CD4-positive, alpha-beta T cell (primary cell): ENCODE measurements at regions of chr12 and their contacts with region 1.

Region 1: DNA sequence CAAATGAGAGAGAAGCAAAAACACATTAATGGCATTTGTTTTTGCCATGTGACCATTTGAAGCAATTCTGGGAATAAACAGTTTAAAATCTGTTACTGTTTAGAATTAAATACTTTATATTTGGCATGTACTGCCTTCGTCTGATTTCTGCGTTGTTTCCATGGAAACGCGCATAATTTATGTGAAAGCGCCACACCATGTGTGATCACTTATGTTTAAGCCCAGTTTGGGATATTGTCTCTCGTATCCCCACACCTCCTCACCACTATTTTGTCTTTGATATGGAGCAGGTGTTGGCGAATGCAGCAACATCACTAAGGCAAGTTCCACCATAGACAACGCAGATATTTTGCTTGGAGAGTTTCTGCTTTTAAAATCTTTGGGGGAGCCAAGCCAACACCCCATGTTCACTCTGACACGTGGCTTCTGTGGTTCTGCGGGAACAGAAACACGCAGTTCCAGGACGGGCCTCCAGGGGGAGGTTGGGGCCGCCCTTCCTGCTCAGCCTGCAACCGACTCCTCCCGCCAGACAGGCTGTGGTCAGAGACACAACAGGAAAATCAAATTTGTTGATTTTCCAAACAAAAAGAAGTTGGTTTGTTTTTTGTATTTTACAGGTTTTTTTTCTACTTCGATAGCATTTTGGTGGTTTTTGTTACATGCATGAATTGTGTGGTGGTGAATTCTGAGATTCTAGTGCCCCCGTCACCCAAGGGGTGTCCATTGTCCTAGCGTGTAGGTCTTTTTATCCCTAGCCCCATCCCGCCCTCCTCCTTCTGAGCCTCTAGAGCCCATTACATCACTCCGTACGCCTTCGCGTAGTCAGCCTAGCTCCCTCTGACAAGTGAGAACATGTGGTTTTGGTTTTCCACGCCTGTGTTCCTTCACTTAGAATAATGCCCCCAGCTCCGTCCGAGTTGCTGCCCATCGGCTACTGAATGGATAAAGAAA is 101.9 kb upstream of the SFSWAP start:
- DNase-seq: peak in 13 of 14 experiments; percentile 34 to 79 (median 54)
- ATAC-seq: peak; percentile 70
- H3K4me3 ChIP-seq: no peak overlapping the region
- H3K4me3 Mint-ChIP-seq: peak overlapping the region; percentile 42
- H3K27ac ChIP-seq: no peak overlapping the region
- H3K27ac Mint-ChIP-seq: no peak overlapping the region
- H3K4me1 ChIP-seq: peaks cover 50% of the 10 kb centered on the region
- H3K4me1 Mint-ChIP-seq: peaks cover 51% of the 10 kb centered on the region
- H3K27me3 ChIP-seq: no peaks in the 10 kb centered on the region
- H3K27me3 Mint-ChIP-seq: no peaks in the 10 kb centered on the region
- CTCF ChIP-seq: peak; percentile 82

Region 2: GRCh38 chr12:131390384-131391334 is 218.4 kb before region 1 on chr12:
- CTCF ChIA-PET with region 1: no interaction called
- POLR2A ChIA-PET with region 1: no interaction called
- intact Hi-C with region 1: no loop called
- DNase-seq: no peak
- ATAC-seq: no peak
- H3K4me3 ChIP-seq: no peak overlapping the region
- H3K4me3 Mint-ChIP-seq: no peak overlapping the region
- H3K27ac ChIP-seq: no peak overlapping the region
- H3K27ac Mint-ChIP-seq: no peak overlapping the region
- H3K4me1 ChIP-seq: no peaks in the 10 kb centered on the region
- H3K4me1 Mint-ChIP-seq: no peaks in the 10 kb centered on the region
- H3K27me3 ChIP-seq: no peaks in the 10 kb centered on the region
- H3K27me3 Mint-ChIP-seq: no peaks in the 10 kb centered on the region
- CTCF ChIP-seq: no peak

Region 3: DNA sequence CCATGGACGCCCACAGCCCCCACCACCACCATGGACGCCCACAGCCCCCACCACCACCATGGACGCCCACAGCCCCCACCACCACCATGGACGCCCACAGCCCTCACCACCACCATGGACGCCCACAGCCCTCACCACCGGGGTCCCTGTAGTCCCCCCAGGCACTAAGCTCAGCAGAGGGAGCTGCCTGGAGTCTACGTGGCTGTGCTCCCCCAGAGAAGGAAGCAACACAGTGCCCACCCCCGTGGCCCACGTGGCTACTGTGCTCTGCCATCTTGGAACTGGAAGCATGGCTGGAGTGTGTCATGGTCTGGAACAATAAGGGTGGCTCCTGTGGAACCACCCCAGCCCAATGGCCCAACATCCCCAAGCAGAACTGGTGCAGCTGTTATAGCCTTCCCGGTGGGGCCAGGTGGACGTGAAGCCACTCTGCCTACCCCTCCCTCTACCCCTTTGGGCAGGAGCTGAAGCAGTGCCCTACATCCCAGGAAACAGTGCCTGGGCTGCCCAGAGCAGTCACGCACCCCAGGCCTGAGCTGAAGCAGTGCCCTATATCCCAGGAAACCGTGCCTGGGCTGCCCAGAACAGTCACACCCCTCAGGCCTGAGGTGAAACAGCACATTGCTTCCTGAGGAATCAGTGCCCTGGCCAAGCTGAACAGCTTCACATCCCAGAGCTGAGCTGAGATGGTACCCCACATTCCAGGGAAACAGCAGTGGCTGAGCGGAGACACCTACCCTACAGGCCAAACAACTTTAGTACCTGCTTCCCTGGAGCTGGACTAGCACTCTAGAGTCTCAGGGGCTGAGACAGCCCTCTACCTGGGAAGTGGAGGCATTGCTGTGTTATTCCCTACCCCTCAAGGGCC is 92.9 kb after region 1 on chr12:
- CTCF ChIA-PET with region 1: no interaction called
- POLR2A ChIA-PET with region 1: no interaction called
- intact Hi-C with region 1: loop called in 1 of 2 experiments (anchors 10 kb)
- DNase-seq: peak in 1 of 14 experiments; percentile 23
- ATAC-seq: no peak
- H3K4me3 ChIP-seq: no peak overlapping the region
- H3K4me3 Mint-ChIP-seq: no peak overlapping the region
- H3K27ac ChIP-seq: no peak overlapping the region
- H3K27ac Mint-ChIP-seq: no peak overlapping the region
- H3K4me1 ChIP-seq: no peaks in the 10 kb centered on the region
- H3K4me1 Mint-ChIP-seq: no peaks in the 10 kb centered on the region
- H3K27me3 ChIP-seq: peaks cover 0 to 2% of the 10 kb centered on the region in 2 experiments
- H3K27me3 Mint-ChIP-seq: peaks cover 5% of the 10 kb centered on the region
- CTCF ChIP-seq: no peak